ENCODE measurements at regions of chr1 and their contacts with region 1.

Region 1: DNA sequence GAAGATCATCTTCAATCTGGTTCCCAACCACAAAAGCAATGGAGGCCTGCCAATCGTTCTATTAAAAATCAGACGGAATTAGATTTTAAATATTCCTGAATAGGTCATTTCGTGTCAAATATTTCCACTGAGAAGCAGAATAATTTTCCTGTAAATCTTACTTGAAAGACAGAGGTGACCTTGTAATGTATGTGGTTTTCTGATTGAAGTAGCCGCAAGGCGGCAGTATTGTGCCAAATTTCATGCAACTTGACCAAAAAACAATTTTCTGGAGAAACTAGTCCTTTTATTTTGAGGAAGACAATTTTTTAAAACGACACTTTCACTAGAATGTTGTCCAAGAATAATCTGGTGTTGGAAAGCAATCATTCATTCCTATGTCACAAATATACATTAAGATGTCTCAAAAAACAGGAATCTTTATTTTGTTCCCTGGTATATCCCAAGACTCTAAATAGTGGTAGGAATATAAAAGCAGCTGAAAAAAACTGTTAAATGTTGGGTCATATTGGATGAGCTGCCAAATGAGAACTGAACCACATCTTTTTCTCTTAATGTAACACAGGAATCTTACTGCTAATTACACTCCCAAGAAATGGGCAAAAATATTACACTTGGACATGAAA is 33.6 kb downstream of the SPAG17 start:
- DNase-seq: peak; percentile 32 to 78 (median 34)
- ATAC-seq: peak; percentile 76
- H3K4me3 ChIP-seq: no peak overlapping the region
- H3K27ac ChIP-seq: no peak overlapping the region
- H3K4me1 ChIP-seq: no peaks in the 10 kb centered on the region
- H3K27me3 ChIP-seq: no peaks in the 10 kb centered on the region
- CTCF ChIP-seq: peak; percentile 68 to 87 (median 81); a peak in 5 of 6 replicates
- EP300 ChIP-seq: no peak
- POLR2A ChIP-seq: no peak
- RAD21 ChIP-seq: peak; percentile 89 to 96

Region 2: GRCh38 chr1:118077331-118078055 is 73.9 kb before region 1 on chr1:
- CTCF ChIA-PET with region 1: no interaction called
- POLR2A ChIA-PET with region 1: no interaction called
- in situ Hi-C with region 1: no loop called
- intact Hi-C with region 1: loop called (anchors 5 kb)
- DNase-seq: peak in 2 of 4 experiments; percentile 13 to 45
- ATAC-seq: peak; percentile 63
- H3K4me3 ChIP-seq: no peak overlapping the region
- H3K27ac ChIP-seq: no peak overlapping the region
- H3K4me1 ChIP-seq: no peaks in the 10 kb centered on the region
- H3K27me3 ChIP-seq: no peaks in the 10 kb centered on the region
- CTCF ChIP-seq: peak; percentile 29 to 60 (median 56); a peak in 4 of 6 replicates
- EP300 ChIP-seq: no peak
- POLR2A ChIP-seq: no peak
- RAD21 ChIP-seq: peak; percentile 53 to 63; a peak in 3 of 4 replicates

Region 3: DNA sequence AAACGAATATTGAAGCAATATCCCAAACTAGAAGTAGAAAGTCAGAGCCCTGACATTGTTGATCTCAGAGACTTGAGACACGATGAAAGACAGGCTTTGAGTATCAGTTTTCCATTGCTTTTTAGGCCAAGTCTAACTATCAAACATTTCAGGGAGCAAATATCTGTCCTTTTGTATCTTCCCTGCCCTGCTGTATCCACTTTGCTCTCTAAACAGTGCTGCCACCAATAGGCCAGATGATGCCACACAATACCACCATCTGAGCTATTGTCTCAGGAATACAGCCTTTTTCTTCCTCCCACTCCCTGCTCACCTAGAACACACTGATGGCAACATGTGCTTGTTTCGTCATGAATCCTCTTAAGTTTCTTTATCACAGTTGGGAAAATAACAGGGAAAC is 96.2 kb after region 1 on chr1:
- CTCF ChIA-PET with region 1: no interaction called
- POLR2A ChIA-PET with region 1: no interaction called
- in situ Hi-C with region 1: no loop called
- intact Hi-C with region 1: loop called (anchors 1 kb)
- DNase-seq: peak; percentile 18 to 26 (median 21)
- ATAC-seq: peak; percentile 81
- H3K4me3 ChIP-seq: no peak overlapping the region
- H3K27ac ChIP-seq: no peak overlapping the region
- H3K4me1 ChIP-seq: no peaks in the 10 kb centered on the region
- H3K27me3 ChIP-seq: no peaks in the 10 kb centered on the region
- CTCF ChIP-seq: peak; percentile 37 to 53 (median 38); a peak in 3 of 6 replicates
- EP300 ChIP-seq: no peak
- POLR2A ChIP-seq: no peak
- RAD21 ChIP-seq: peak in 1 of 2 experiments; percentile 56; a peak in 3 of 4 replicates

Region 4: GRCh38 chr1:118257946-118258345 is 106.5 kb after region 1 on chr1:
- CTCF ChIA-PET with region 1: no interaction called
- POLR2A ChIA-PET with region 1: no interaction called
- in situ Hi-C with region 1: no loop called
- intact Hi-C with region 1: no loop called
- DNase-seq: no peak
- ATAC-seq: no peak
- H3K4me3 ChIP-seq: no peak overlapping the region
- H3K27ac ChIP-seq: no peak overlapping the region
- H3K4me1 ChIP-seq: no peaks in the 10 kb centered on the region
- H3K27me3 ChIP-seq: no peaks in the 10 kb centered on the region
- CTCF ChIP-seq: no peak
- EP300 ChIP-seq: no peak
- POLR2A ChIP-seq: no peak
- RAD21 ChIP-seq: no peak

Region 5: DNA sequence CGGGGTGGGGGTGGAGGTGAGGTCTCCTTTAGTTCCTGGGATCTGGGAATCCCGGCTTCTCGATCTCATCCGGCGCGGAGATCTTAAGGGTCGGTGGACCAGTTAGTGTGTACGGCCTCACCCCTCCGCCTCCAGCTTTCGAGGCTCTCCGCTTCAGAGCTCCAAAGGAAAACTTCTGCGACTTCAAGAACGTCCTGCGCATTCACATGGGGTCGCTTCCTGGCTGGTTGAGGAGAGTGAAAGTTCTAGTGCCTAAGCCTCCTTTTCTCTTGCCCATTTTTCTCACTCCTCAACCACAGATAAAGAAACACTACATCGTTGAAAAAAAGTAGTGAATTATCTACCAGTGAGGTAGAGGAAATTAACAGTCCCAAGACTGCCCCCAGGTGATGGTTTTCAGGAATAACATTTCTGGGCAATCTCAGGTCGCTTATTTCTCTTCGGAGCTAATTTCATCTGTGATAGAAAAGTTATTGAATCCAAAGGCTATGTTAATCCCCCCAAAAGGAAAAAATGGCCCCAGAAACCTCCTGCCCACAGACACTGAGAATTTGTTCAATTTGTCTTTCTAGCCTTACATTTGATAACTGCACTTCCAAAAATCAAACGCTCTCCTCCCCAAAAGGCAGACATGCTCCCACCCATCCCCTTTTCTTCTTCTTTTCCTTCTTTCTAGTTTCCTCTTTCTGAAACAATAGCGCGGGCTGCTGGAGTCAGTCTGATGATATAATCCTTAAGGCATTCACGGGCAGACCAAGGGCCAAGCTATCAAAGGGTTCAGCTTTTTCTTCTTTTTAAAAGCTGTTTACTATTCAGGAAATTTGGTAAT is 857.3 kb after region 1 on chr1:
- CTCF ChIA-PET with region 1: interaction called, 6 read pairs
- POLR2A ChIA-PET with region 1: interaction called, 3 read pairs
- in situ Hi-C with region 1: no loop called
- intact Hi-C with region 1: loop called (anchors 2 kb)
- DNase-seq: peak; percentile 39 to 62 (median 42)
- ATAC-seq: peak; percentile 85
- H3K4me3 ChIP-seq: no peak overlapping the region
- H3K27ac ChIP-seq: no peak overlapping the region
- H3K4me1 ChIP-seq: peaks cover 0 to 10% of the 10 kb centered on the region in 2 experiments; a peak in 1 of 5 replicates
- H3K27me3 ChIP-seq: peaks cover 11 to 35% of the 10 kb centered on the region in 2 experiments; a peak in 3 of 5 replicates
- CTCF ChIP-seq: peak; percentile 45 to 72 (median 61); a peak in 5 of 6 replicates
- EP300 ChIP-seq: no peak
- POLR2A ChIP-seq: no peak
- RAD21 ChIP-seq: peak; percentile 91

Region 6: GRCh38 chr1:119275145-119276134 is 1124.0 kb after region 1 on chr1:
- CTCF ChIA-PET with region 1: no interaction called
- POLR2A ChIA-PET with region 1: no interaction called
- in situ Hi-C with region 1: no loop called
- intact Hi-C with region 1: loop called (anchors 1 kb)
- DNase-seq: peak; percentile 53 to 68 (median 60)
- ATAC-seq: peak; percentile 97
- H3K4me3 ChIP-seq: no peak overlapping the region
- H3K27ac ChIP-seq: no peak overlapping the region
- H3K4me1 ChIP-seq: no peaks in the 10 kb centered on the region
- H3K27me3 ChIP-seq: no peaks in the 10 kb centered on the region
- CTCF ChIP-seq: peak; percentile 71 to 89 (median 83)
- EP300 ChIP-seq: no peak
- POLR2A ChIP-seq: no peak
- RAD21 ChIP-seq: peak; percentile 30 to 63; a peak in 3 of 4 replicates

Region 7: DNA sequence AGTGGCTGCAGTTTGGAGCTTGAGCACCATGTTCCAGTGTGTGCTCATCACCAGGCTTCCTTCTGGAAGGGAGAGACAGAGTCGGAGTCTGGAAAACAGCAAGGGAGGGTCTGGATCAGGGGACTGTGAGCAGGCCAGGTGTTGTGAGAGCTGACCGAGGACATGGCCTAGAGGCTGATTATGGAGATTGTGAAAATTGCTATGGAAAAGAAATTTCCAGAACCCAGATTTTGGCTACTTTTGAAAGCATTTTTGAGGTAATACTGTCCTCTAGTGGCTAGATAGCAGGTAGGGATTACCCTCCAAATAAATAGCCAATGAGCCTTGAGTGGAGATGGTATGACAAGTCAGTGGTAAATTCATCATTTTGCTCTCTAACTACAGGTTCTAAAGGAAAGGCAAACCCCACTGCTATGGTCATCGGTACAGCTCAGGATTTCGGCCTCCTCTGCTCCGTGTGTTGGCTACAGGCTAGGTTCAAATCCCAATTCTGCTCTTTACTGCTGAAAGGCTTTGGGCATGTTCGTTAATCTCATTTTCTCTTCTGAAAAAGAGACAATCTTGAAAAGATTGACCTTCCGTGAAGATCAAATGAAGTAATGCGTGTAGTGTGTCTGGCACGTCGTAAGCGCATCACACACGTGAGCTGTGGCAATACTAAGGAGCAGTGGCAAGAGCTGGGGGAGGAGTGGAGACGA is 1216.2 kb after region 1 on chr1:
- CTCF ChIA-PET with region 1: no interaction called
- POLR2A ChIA-PET with region 1: no interaction called
- in situ Hi-C with region 1: no loop called
- intact Hi-C with region 1: loop called (anchors 1 kb)
- DNase-seq: peak; percentile 27 to 59 (median 40)
- ATAC-seq: peak; percentile 85
- H3K4me3 ChIP-seq: no peak overlapping the region
- H3K27ac ChIP-seq: no peak overlapping the region
- H3K4me1 ChIP-seq: no peaks in the 10 kb centered on the region
- H3K27me3 ChIP-seq: peaks cover 9% of the 10 kb centered on the region in 2 experiments; a peak in 3 of 5 replicates
- CTCF ChIP-seq: peak; percentile 67 to 96 (median 87)
- EP300 ChIP-seq: no peak
- POLR2A ChIP-seq: no peak
- RAD21 ChIP-seq: peak; percentile 93 to 96